ENCODE measurements at regions of chr6 and their contacts with region 1.

Region 1: DNA sequence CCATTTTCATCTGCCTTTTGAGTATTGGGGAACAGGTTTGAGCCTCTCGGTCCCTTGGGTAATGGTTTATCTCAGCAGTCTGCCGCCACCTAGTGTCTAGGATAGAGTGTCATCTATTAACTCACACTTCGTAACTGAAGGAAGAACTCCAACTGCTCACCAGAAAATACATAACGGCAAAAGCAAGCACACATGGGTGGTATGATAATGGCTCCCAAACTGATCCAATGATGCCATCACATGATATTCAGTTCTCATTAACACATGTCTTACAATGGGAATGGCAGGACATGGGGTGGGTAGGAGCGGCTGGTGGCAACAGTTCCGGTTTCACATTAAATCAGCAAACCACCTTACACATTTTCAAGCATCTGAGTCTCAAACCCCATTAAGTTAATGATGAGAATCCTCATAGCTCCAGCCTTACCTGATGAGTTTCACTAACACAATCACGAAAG is 110.7 kb upstream of the PHACTR1 start:
- DNase-seq: no peak
- ATAC-seq: peak; percentile 77
- H3K4me3 Mint-ChIP-seq: peak overlapping the region; percentile 61
- H3K27ac Mint-ChIP-seq: no peak overlapping the region
- H3K4me1 Mint-ChIP-seq: peaks cover 31% of the 10 kb centered on the region
- H3K27me3 Mint-ChIP-seq: peaks cover 3% of the 10 kb centered on the region
- CTCF ChIP-seq: no peak

Region 2: DNA sequence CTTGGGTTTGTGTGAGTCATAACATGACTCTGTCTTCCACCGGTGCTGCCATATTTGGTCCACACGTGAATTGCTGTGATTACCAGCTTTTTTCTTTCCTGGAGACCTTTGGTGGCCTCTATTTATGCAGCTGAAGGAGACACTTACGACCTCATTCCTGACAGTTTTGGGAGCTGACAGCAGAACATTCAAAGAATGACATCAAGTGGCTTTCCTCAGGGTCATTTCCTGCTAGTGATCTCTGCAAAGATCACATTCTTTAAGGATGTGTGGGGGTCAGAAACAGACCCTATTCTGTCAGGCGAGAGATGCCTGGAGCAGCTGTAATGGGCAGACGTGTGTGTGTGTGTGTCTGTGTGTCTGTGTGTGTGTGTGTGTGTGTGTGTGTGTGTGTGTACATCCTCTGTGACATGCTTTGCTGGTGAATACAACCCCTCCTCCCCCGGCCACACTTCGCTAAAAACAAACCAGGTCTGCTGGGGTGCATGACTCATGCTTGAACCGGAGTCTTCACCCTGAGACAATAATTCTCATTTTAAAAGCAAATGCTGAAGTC is 952.8 kb before region 1 on chr6:
- CTCF ChIA-PET with region 1: interaction called, 44 read pairs
- POLR2A ChIA-PET with region 1: no interaction called
- intact Hi-C with region 1: loop called (anchors 1 kb)
- DNase-seq: no peak
- ATAC-seq: peak; percentile 31
- H3K4me3 Mint-ChIP-seq: no peak overlapping the region
- H3K27ac Mint-ChIP-seq: no peak overlapping the region
- H3K4me1 Mint-ChIP-seq: no peaks in the 10 kb centered on the region
- H3K27me3 Mint-ChIP-seq: peaks cover 9% of the 10 kb centered on the region
- CTCF ChIP-seq: no peak

Region 3: DNA sequence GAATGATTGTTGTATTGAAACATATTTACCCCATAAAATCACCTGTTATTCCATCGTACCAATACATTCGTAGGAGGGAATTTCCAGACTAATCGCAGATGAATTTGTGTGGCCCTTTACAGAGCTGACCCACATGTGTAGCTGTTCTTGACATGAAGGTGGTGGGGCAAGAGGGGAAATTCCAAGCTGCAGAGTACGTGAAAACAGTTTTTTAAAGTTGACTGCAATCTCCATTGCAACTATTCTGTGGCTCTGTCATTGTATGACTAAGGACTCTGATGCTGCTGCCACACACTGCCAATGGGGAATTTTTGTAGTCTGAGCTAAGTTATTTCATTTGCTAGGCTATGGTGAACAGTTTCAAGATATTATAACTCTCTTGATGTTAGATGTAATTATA is 780.9 kb before region 1 on chr6:
- CTCF ChIA-PET with region 1: no interaction called
- POLR2A ChIA-PET with region 1: no interaction called
- intact Hi-C with region 1: loop called (anchors 10 kb)
- DNase-seq: no peak
- ATAC-seq: peak; percentile 83
- H3K4me3 Mint-ChIP-seq: peak overlapping the region; percentile 36
- H3K27ac Mint-ChIP-seq: peak overlapping the region; percentile 64
- H3K4me1 Mint-ChIP-seq: peaks cover 42% of the 10 kb centered on the region
- H3K27me3 Mint-ChIP-seq: no peaks in the 10 kb centered on the region
- CTCF ChIP-seq: no peak

Region 4: GRCh38 chr6:12233693-12234571 is 372.0 kb before region 1 on chr6:
- CTCF ChIA-PET with region 1: interaction called, 4 read pairs
- POLR2A ChIA-PET with region 1: no interaction called
- intact Hi-C with region 1: loop called (anchors 1 kb)
- DNase-seq: peak; percentile 15
- ATAC-seq: peak; percentile 62
- H3K4me3 Mint-ChIP-seq: no peak overlapping the region
- H3K27ac Mint-ChIP-seq: no peak overlapping the region
- H3K4me1 Mint-ChIP-seq: peaks cover 14% of the 10 kb centered on the region
- H3K27me3 Mint-ChIP-seq: no peaks in the 10 kb centered on the region
- CTCF ChIP-seq: no peak

Region 5: GRCh38 chr6:12313992-12314805 is 291.7 kb before region 1 on chr6:
- CTCF ChIA-PET with region 1: interaction called, 5 read pairs
- POLR2A ChIA-PET with region 1: no interaction called
- intact Hi-C with region 1: loop called (anchors 1 kb)
- DNase-seq: no peak
- ATAC-seq: no peak
- H3K4me3 Mint-ChIP-seq: no peak overlapping the region
- H3K27ac Mint-ChIP-seq: no peak overlapping the region
- H3K4me1 Mint-ChIP-seq: no peaks in the 10 kb centered on the region
- H3K27me3 Mint-ChIP-seq: no peaks in the 10 kb centered on the region
- CTCF ChIP-seq: no peak

Region 6: GRCh38 chr6:12595161-12595811 is 10.6 kb before region 1 on chr6:
- CTCF ChIA-PET with region 1: interaction called, 12 read pairs
- POLR2A ChIA-PET with region 1: no interaction called
- intact Hi-C with region 1: no loop called
- DNase-seq: no peak
- ATAC-seq: peak; percentile 37
- H3K4me3 Mint-ChIP-seq: peak overlapping the region; percentile 11
- H3K27ac Mint-ChIP-seq: peak overlapping the region; percentile 54
- H3K4me1 Mint-ChIP-seq: peaks cover 3% of the 10 kb centered on the region
- H3K27me3 Mint-ChIP-seq: no peaks in the 10 kb centered on the region
- CTCF ChIP-seq: no peak